ENCODE measurements at regions of chr4 and their contacts with region 1.

Region 1: GRCh38 chr4:169010125-169011023 is at the start of gene CBR4:
- DNase-seq: peak; percentile 90 to 99 (median 94)
- ATAC-seq: peak; percentile 92
- H3K4me3 ChIP-seq: peak within 1 kb of the TSS; percentile 89
- H3K4me3 Mint-ChIP-seq: peak within 1 kb of the TSS; percentile 95
- H3K27ac ChIP-seq: peak within 1 kb of the TSS; percentile 89 to 92
- H3K27ac Mint-ChIP-seq: peak within 1 kb of the TSS; percentile 94
- H3K4me1 ChIP-seq: peaks cover 16% of the 10 kb centered on the region
- H3K4me1 Mint-ChIP-seq: peaks cover 39% of the 10 kb centered on the region
- H3K27me3 ChIP-seq: no peaks in the 10 kb centered on the region
- H3K27me3 Mint-ChIP-seq: peaks cover 4% of the 10 kb centered on the region
- CTCF ChIP-seq: peak; percentile 56
- total RNA-seq, gene CBR4: 5.1 to 5.4 TPM

Region 2: GRCh38 chr4:168318266-168318895 is 692.0 kb before region 1 on chr4 and contains the start of gene DDX60:
- CTCF ChIA-PET with region 1: no interaction called
- POLR2A ChIA-PET with region 1: interaction called, 19 read pairs
- intact Hi-C with region 1: loop called (anchors 5 kb)
- DNase-seq: peak; percentile 69 to 94 (median 83)
- ATAC-seq: peak; percentile 92
- H3K4me3 ChIP-seq: peak within 1 kb of the TSS; percentile 94
- H3K4me3 Mint-ChIP-seq: peak within 1 kb of the TSS; percentile 99
- H3K27ac ChIP-seq: peak within 1 kb of the TSS; percentile 94 to 97
- H3K27ac Mint-ChIP-seq: peak within 1 kb of the TSS; percentile 100
- H3K4me1 ChIP-seq: peaks cover 12% of the 10 kb centered on the region
- H3K4me1 Mint-ChIP-seq: peaks cover 67% of the 10 kb centered on the region
- H3K27me3 ChIP-seq: no peaks in the 10 kb centered on the region
- H3K27me3 Mint-ChIP-seq: no peaks in the 10 kb centered on the region
- CTCF ChIP-seq: no peak
- total RNA-seq, gene DDX60: 11.9 to 12.2 TPM

Region 3: DNA sequence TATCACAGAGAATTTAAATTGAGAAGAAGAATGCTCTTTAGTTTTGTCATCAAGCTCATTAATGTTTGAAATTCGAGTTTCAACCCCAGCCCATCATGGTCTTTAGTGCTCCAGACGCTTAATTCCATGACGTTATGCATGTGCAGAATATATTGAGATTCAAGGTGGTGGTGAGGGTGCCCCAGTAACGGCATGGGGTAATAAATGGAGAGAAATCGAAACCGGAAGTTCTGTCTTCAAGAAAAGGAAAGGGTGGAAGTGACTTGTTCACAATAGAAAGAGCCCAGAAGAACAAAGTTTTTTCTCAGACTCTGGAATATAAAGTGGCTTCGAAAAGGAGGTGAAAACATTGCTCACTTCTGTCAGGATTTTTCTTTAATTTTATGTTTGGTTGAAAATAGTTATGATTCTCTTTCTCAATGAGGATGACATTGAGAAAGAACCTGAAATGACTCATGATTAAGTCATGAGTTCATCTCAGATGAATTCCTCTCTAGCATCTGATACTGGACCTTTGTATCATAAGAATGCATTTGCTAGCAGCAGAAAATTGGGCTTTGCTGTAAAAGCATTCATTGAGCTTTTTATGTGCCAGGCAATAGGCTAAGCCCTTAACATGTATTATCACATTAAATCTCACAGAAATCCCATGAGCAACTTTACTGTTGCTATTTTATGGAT is 529.3 kb before region 1 on chr4:
- CTCF ChIA-PET with region 1: no interaction called
- POLR2A ChIA-PET with region 1: interaction called, 10 read pairs
- intact Hi-C with region 1: loop called (anchors 2 to 10 kb)
- DNase-seq: peak; percentile 12 to 87 (median 34)
- ATAC-seq: peak; percentile 68
- H3K4me3 ChIP-seq: peak overlapping the region; percentile 84
- H3K4me3 Mint-ChIP-seq: peak overlapping the region; percentile 99
- H3K27ac ChIP-seq: peak overlapping the region; percentile 78 to 86
- H3K27ac Mint-ChIP-seq: peak overlapping the region; percentile 97
- H3K4me1 ChIP-seq: peaks cover 20% of the 10 kb centered on the region
- H3K4me1 Mint-ChIP-seq: peaks cover 78% of the 10 kb centered on the region
- H3K27me3 ChIP-seq: no peaks in the 10 kb centered on the region
- H3K27me3 Mint-ChIP-seq: no peaks in the 10 kb centered on the region
- CTCF ChIP-seq: no peak

Region 4: GRCh38 chr4:168923526-168924194 is 86.7 kb before region 1 on chr4:
- CTCF ChIA-PET with region 1: interaction called, 3 read pairs
- POLR2A ChIA-PET with region 1: interaction called, 5 read pairs
- intact Hi-C with region 1: loop called (anchors 1 to 5 kb)
- DNase-seq: peak in 13 of 14 experiments; percentile 3 to 79 (median 38)
- ATAC-seq: peak; percentile 46
- H3K4me3 ChIP-seq: no peak overlapping the region
- H3K4me3 Mint-ChIP-seq: no peak overlapping the region
- H3K27ac ChIP-seq: no peak overlapping the region
- H3K27ac Mint-ChIP-seq: no peak overlapping the region
- H3K4me1 ChIP-seq: no peaks in the 10 kb centered on the region
- H3K4me1 Mint-ChIP-seq: no peaks in the 10 kb centered on the region
- H3K27me3 ChIP-seq: no peaks in the 10 kb centered on the region
- H3K27me3 Mint-ChIP-seq: no peaks in the 10 kb centered on the region
- CTCF ChIP-seq: peak; percentile 86

Region 5: GRCh38 chr4:169612871-169613859 is 602.8 kb after region 1 on chr4:
- CTCF ChIA-PET with region 1: interaction called, 5 read pairs
- POLR2A ChIA-PET with region 1: interaction called, 14 read pairs
- intact Hi-C with region 1: loop called in 1 of 2 experiments (anchors 5 kb)
- DNase-seq: peak; percentile 47 to 87 (median 66)
- ATAC-seq: peak; percentile 47
- H3K4me3 ChIP-seq: peak overlapping the region; percentile 83
- H3K4me3 Mint-ChIP-seq: peak overlapping the region; percentile 98
- H3K27ac ChIP-seq: peak overlapping the region; percentile 98
- H3K27ac Mint-ChIP-seq: peak overlapping the region; percentile 100
- H3K4me1 ChIP-seq: peaks cover 17% of the 10 kb centered on the region
- H3K4me1 Mint-ChIP-seq: peaks cover 46% of the 10 kb centered on the region
- H3K27me3 ChIP-seq: no peaks in the 10 kb centered on the region
- H3K27me3 Mint-ChIP-seq: no peaks in the 10 kb centered on the region
- CTCF ChIP-seq: peak; percentile 90

Region 6: DNA sequence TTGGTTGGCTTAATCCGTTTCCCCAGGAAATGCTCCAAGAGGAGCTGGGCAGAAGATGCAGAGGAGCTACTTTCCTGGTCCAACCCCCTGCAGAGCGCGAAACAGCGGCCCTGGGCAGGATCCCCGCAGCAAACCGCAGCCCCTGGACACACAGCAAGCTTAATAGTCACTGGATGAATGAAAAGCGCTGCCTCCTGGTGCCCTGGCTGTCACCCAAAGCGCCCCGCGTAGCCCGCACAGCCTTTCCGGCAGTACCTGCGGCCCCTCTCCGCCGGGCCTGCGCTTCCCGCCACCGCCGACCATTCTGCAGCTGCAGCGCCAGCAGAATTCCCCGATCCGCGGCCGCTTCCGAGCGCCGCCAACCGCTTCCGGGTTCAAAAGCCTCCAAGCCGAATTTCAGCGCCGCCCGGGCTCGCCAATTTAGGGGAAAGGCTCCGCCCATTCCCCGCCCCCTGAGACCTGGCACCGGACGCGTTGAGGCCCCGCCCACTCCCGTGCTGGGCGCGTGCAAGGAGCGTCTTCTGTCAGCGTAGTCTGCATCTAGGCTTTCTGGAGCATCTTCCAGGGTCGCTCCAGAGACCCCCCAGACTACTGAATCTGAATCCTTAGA is 747.3 kb after region 1 on chr4 and contains the start of gene HPF1:
- CTCF ChIA-PET with region 1: no interaction called
- POLR2A ChIA-PET with region 1: interaction called, 7 read pairs
- intact Hi-C with region 1: loop called in 1 of 2 experiments (anchors 5 kb)
- DNase-seq: peak; percentile 83 to 99 (median 92)
- ATAC-seq: peak; percentile 97
- H3K4me3 ChIP-seq: peak within 1 kb of the TSS; percentile 83
- H3K4me3 Mint-ChIP-seq: peak within 1 kb of the TSS; percentile 85
- H3K27ac ChIP-seq: peak within 1 kb of the TSS; percentile 23 to 29
- H3K27ac Mint-ChIP-seq: peak within 1 kb of the TSS; percentile 26
- H3K4me1 ChIP-seq: peaks cover 17% of the 10 kb centered on the region
- H3K4me1 Mint-ChIP-seq: peaks cover 33% of the 10 kb centered on the region
- H3K27me3 ChIP-seq: no peaks in the 10 kb centered on the region
- H3K27me3 Mint-ChIP-seq: no peaks in the 10 kb centered on the region
- CTCF ChIP-seq: no peak
- total RNA-seq, gene HPF1: 4.4 to 4.8 TPM